MCF 10A (cell line): ENCODE measurements at regions of chr5 and their contacts with region 1.

Region 1: DNA sequence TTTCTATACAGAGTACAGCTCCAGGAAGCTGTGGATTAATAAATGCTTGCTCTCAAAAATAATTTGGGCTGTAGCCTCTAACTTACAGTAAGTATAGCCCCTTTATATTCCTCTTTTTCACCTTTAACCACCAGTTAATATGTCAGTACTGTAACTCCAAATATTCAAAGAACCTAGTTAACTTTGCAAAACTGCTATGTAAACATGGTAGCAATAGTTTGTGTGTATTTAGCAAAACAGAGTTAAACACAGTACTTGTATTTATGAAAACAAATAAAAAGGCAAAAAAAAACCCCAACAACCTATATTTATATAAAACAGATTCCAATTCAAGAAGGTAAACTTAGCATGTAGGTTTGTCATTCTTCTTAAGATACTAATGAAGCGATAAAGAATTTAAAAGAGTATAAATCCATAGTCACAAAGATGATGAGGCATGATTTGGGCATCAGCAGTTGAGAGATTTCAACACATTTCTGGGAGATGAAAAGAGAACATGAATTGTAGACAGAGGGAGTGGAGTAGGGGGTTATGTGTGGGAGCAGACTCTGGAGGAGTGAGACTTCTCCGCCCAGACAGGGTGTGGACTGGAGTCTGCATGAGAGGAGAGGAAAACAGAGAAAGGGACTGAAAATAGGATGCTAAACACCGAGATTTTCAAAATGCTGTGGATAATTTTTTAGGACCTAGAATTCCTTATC is 47.0 kb upstream of the F2RL1 start:
- DNase-seq: no peak
- H3K4me3 Mint-ChIP-seq: no peak overlapping the region
- H3K27ac Mint-ChIP-seq: peak overlapping the region; percentile 8
- H3K4me1 Mint-ChIP-seq: peaks cover 9% of the 10 kb centered on the region
- H3K27me3 Mint-ChIP-seq: no peaks in the 10 kb centered on the region
- CTCF ChIP-seq: no peak

Region 2: DNA sequence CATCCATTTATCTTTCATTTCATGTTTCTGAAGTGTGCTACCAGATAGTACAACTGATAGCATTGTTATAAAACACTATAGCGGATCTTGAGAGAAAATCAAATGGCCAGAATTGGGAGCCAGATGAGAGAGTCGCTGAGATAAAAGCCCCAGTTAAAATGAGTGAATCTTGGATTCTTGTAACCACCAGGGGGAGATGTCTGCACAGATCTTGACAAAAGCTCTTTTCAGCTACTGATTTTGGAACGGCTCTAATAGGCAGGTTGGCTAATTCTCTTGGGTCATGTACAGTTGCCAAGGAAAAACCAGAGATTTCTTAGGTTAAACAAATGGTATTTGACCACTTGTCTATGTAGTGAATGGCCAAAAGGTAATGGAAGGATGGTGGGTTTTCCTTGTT is 170.4 kb before region 1 on chr5:
- CTCF ChIA-PET with region 1: interaction called, 281 read pairs
- POLR2A ChIA-PET with region 1: interaction called, 18 read pairs
- intact Hi-C with region 1: loop called (anchors 1 kb)
- DNase-seq: peak; percentile 83
- H3K4me3 Mint-ChIP-seq: no peak overlapping the region
- H3K27ac Mint-ChIP-seq: no peak overlapping the region
- H3K4me1 Mint-ChIP-seq: peaks cover 25% of the 10 kb centered on the region
- H3K27me3 Mint-ChIP-seq: no peaks in the 10 kb centered on the region
- CTCF ChIP-seq: peak; percentile 63

Region 3: DNA sequence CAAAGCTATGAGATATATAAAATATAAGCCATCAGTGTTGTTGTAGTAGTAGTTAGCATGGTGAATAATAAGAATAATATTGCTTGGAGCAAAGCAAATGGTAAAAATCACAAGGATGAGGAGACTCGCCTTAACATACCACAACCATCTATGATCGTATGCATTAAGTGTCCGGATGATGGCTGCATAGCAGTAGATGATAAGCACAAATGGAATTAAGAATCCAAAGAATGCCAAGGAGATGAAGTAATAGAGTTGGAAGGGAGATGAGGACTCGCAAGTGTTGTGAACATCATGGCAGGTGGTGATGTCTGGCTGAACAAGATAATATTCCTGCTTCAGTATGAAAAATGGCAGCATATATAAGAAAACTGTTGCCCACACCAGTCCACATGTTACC is 154.2 kb before region 1 on chr5:
- CTCF ChIA-PET with region 1: interaction called, 20 read pairs
- POLR2A ChIA-PET with region 1: no interaction called
- intact Hi-C with region 1: no loop called
- DNase-seq: no peak
- H3K4me3 Mint-ChIP-seq: no peak overlapping the region
- H3K27ac Mint-ChIP-seq: no peak overlapping the region
- H3K4me1 Mint-ChIP-seq: peaks cover 6% of the 10 kb centered on the region
- H3K27me3 Mint-ChIP-seq: no peaks in the 10 kb centered on the region
- CTCF ChIP-seq: no peak

Region 4: GRCh38 chr5:76691467-76692138 is 80.3 kb before region 1 on chr5:
- CTCF ChIA-PET with region 1: interaction called, 15 read pairs
- POLR2A ChIA-PET with region 1: no interaction called
- intact Hi-C with region 1: no loop called
- DNase-seq: no peak
- H3K4me3 Mint-ChIP-seq: no peak overlapping the region
- H3K27ac Mint-ChIP-seq: peak overlapping the region; percentile 81
- H3K4me1 Mint-ChIP-seq: peaks cover 25% of the 10 kb centered on the region
- H3K27me3 Mint-ChIP-seq: no peaks in the 10 kb centered on the region
- CTCF ChIP-seq: no peak

Region 5: DNA sequence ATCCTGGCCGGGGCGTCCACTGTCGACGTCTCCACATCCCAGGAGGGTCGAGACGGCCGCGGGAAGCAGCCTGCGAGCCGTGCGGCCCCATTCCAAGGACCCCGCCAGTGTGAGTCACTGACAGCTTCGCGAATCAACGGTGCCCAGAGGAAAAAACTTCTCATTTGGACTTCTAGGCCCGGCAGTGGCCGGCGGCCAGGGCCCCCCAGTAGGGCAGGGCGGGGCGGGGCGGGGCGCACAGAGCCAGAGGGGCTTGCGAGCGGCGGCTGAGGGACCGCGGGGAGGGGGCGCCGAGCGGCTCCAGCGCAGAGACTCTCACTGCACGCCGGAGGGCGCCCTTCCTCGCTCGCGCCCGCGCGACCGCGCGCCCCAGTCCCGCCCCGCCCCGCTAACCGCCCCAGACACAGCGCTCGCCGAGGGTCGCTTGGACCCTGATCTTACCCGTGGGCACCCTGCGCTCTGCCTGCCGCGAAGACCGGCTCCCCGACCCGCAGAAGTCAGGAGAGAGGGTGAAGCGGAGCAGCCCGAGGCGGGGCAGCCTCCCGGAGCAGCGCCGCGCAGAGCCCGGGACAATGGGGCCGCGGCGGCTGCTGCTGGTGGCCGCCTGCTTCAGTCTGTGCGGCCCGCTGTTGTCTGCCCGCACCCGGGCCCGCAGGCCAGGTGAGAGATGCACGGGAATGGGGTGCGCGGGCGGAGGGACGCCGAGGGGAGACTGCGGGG is 56.0 kb before region 1 on chr5 and contains the start of gene F2R:
- CTCF ChIA-PET with region 1: interaction called, 32 read pairs
- POLR2A ChIA-PET with region 1: interaction called, 5 read pairs
- intact Hi-C with region 1: loop called (anchors 5 kb)
- DNase-seq: peak; percentile 57
- H3K4me3 Mint-ChIP-seq: peak within 1 kb of the TSS; percentile 79
- H3K27ac Mint-ChIP-seq: peak within 1 kb of the TSS; percentile 66
- H3K4me1 Mint-ChIP-seq: peaks cover 29% of the 10 kb centered on the region
- H3K27me3 Mint-ChIP-seq: no peaks in the 10 kb centered on the region
- CTCF ChIP-seq: peak; percentile 65
- total RNA-seq, gene F2R: 17.3 and 17.6 TPM in 2 replicates

Region 6: GRCh38 chr5:76754668-76755078 is 17.2 kb before region 1 on chr5:
- CTCF ChIA-PET with region 1: interaction called, 19 read pairs
- POLR2A ChIA-PET with region 1: no interaction called
- intact Hi-C with region 1: no loop called
- DNase-seq: peak; percentile 58
- H3K4me3 Mint-ChIP-seq: no peak overlapping the region
- H3K27ac Mint-ChIP-seq: no peak overlapping the region
- H3K4me1 Mint-ChIP-seq: peaks cover 19% of the 10 kb centered on the region
- H3K27me3 Mint-ChIP-seq: no peaks in the 10 kb centered on the region
- CTCF ChIP-seq: no peak

Region 7: GRCh38 chr5:77024490-77024889 is 252.6 kb after region 1 on chr5:
- CTCF ChIA-PET with region 1: no interaction called
- POLR2A ChIA-PET with region 1: no interaction called
- intact Hi-C with region 1: no loop called
- DNase-seq: no peak
- H3K4me3 Mint-ChIP-seq: no peak overlapping the region
- H3K27ac Mint-ChIP-seq: no peak overlapping the region
- H3K4me1 Mint-ChIP-seq: peaks cover 4% of the 10 kb centered on the region
- H3K27me3 Mint-ChIP-seq: peaks cover 11% of the 10 kb centered on the region
- CTCF ChIP-seq: no peak